ENCODE measurements at regions of chr18 and their contacts with region 1.

Region 1: GRCh38 chr18:21264651-21265050 is 22.6 kb downstream of the GREB1L start:
- DNase-seq: no peak
- H3K4me3 ChIP-seq: peak overlapping the region in 1 of 59 donors; percentile 6
- H3K27ac ChIP-seq: peak overlapping the region in 22 of 59 donors; percentile 10 to 82 (median 40)
- H3K27me3 ChIP-seq: peaks cover 0 to 4% (median 0%) of the 10 kb centered on the region in 45 donors
- CTCF ChIP-seq: no peak

Region 2: DNA sequence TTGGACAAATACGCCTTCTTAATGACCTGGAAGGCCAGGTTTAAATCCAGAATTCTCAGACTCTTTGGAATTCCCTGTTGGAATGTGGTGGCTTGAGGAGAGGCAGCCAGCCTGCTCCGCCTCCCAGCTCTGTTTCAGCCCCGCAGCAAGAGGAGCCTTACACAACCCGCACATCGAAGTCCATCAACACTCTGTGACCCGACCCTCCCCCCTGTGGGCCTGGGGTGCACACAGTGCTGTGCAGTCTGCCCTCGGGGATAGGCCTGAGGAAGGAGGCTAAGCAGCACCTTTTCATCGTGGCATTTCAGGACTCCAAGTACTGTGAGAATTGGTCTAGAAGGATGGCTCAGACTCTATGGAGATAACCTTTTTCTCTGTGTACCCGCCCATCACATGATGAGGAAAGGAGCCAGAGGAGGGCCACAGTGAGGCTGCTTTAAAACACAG is 51.1 kb after region 1 on chr18:
- intact Hi-C with region 1: loop called in 1 of 2 experiments (anchors 10 kb)
- DNase-seq: no peak
- H3K4me3 ChIP-seq: no peak overlapping the region
- H3K27ac ChIP-seq: no peak overlapping the region
- H3K27me3 ChIP-seq: no peaks in the 10 kb centered on the region
- CTCF ChIP-seq: no peak